ENCODE measurements at regions of chr14 and their contacts with region 1.

Region 1: GRCh38 chr14:33792720-33793368 is 158.0 kb downstream of the EGLN3 start:
- DNase-seq: peak; percentile 56 to 94 (median 80)
- ATAC-seq: peak; percentile 84 to 98 (median 96)
- H3K4me3 ChIP-seq: no peak overlapping the region
- H3K27ac ChIP-seq: no peak overlapping the region
- H3K4me1 ChIP-seq: no peaks in the 10 kb centered on the region
- H3K27me3 ChIP-seq: no peaks in the 10 kb centered on the region
- CTCF ChIP-seq: peak; percentile 80 to 91 (median 88)

Region 2: GRCh38 chr14:32576088-32576795 is 1216.6 kb before region 1 on chr14:
- intact Hi-C with region 1: loop called in 2 of 3 experiments (anchors 5 to 10 kb)
- DNase-seq: peak in 3 of 6 donors; percentile 18 to 56 (median 21)
- ATAC-seq: peak; percentile 78 to 98 (median 96)
- H3K4me3 ChIP-seq: no peak overlapping the region
- H3K27ac ChIP-seq: no peak overlapping the region
- H3K4me1 ChIP-seq: peaks cover 0 to 4% (median 0%) of the 10 kb centered on the region in 3 donors
- H3K27me3 ChIP-seq: no peaks in the 10 kb centered on the region
- CTCF ChIP-seq: peak; percentile 86 to 96 (median 90)

Region 3: GRCh38 chr14:32702562-32702961 is 1090.3 kb before region 1 on chr14:
- intact Hi-C with region 1: loop called in 1 of 3 experiments (anchors 10 kb)
- DNase-seq: peak in 1 of 6 donors; percentile 14
- ATAC-seq: peak in 3 of 4 donors; percentile 67 to 83 (median 69)
- H3K4me3 ChIP-seq: no peak overlapping the region
- H3K27ac ChIP-seq: peak overlapping the region in 2 of 4 donors; percentile 16 to 31
- H3K4me1 ChIP-seq: no peaks in the 10 kb centered on the region
- H3K27me3 ChIP-seq: no peaks in the 10 kb centered on the region
- CTCF ChIP-seq: no peak

Region 4: DNA sequence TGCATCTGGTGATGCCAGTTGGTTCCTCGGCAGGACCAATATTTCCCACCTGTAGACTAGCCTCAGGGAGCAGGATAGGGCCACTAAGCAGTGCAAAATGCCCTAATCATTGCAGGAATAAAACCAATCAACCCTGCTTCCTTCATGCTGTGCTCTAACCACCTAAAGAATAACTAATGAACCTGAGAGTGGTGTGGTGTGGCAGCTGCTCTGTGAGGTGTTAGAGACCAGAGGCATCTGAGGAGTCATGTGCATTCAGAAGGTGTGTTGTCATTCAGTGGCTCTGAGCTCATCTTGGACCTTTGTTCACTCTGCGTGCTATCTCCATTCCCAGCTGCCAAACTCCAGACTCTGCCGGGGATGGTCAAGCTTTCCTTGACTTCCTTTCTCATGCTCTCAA is 294.7 kb after region 1 on chr14:
- intact Hi-C with region 1: no loop called
- DNase-seq: no peak
- ATAC-seq: no peak
- H3K4me3 ChIP-seq: no peak overlapping the region
- H3K27ac ChIP-seq: no peak overlapping the region
- H3K4me1 ChIP-seq: peaks cover 0 to 5% (median 0%) of the 10 kb centered on the region in 3 donors
- H3K27me3 ChIP-seq: no peaks in the 10 kb centered on the region
- CTCF ChIP-seq: no peak

Measured in pancreas (tissue), 10 donors.